ENCODE measurements at regions of chr13 and their contacts with region 1.

Region 1: DNA sequence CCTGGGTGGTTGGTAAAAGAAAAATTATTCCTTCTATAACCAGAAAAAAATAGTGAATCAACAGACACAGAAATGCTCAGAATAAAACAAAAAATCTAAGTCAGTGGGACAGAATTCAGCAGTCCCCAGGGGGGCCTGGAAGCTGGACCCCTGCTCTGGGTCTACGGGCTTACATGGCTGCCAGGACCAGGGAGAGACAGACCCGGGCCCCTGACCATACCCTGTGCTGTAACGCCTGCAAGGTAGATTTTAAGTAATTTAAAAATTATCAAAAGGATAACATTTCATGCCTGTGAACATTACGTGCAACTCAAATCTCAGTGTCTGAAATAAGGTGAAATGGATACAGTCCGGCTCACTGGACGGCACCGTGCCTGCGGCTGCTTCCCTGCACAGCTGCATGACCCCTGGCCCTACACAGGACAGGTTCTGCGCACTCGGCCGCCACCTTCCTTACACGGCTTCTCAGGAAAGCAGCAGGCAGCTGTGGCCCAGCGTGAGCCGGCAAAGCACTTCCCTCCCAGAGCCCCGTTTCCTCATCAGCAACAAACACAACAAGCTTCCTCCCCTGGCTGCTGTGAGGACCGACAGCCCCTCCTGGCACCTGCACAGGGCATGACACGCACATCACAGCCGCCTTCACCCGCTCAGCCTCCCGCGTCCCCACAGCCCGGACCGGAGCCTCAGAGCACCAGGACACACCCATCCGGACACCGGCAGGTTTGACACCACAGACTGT is 22.2 kb downstream of the RASA3 start:
- DNase-seq: peak; percentile 64 to 93 (median 80)
- ATAC-seq: peak; percentile 86
- H3K4me3 ChIP-seq: peak overlapping the region; percentile 40 to 53
- H3K4me3 Mint-ChIP-seq: peak overlapping the region; percentile 83
- H3K27ac ChIP-seq: peak overlapping the region; percentile 50 to 80
- H3K27ac Mint-ChIP-seq: peak overlapping the region; percentile 94
- H3K4me1 ChIP-seq: peaks cover 95% of the 10 kb centered on the region
- H3K4me1 Mint-ChIP-seq: peaks cover 82% of the 10 kb centered on the region
- H3K27me3 ChIP-seq: no peaks in the 10 kb centered on the region
- H3K27me3 Mint-ChIP-seq: no peaks in the 10 kb centered on the region
- CTCF ChIP-seq: peak; percentile 69

Region 2: GRCh38 chr13:113816946-113817859 is 293.1 kb before region 1 on chr13:
- CTCF ChIA-PET with region 1: interaction called, 3 read pairs
- POLR2A ChIA-PET with region 1: no interaction called
- intact Hi-C with region 1: loop called (anchors 1 kb)
- DNase-seq: peak; percentile 74 to 93 (median 90)
- ATAC-seq: peak; percentile 97
- H3K4me3 ChIP-seq: no peak overlapping the region
- H3K4me3 Mint-ChIP-seq: peak overlapping the region; percentile 82
- H3K27ac ChIP-seq: no peak overlapping the region
- H3K27ac Mint-ChIP-seq: peak overlapping the region; percentile 52
- H3K4me1 ChIP-seq: peaks cover 10% of the 10 kb centered on the region
- H3K4me1 Mint-ChIP-seq: peaks cover 22% of the 10 kb centered on the region
- H3K27me3 ChIP-seq: no peaks in the 10 kb centered on the region
- H3K27me3 Mint-ChIP-seq: peaks cover 2% of the 10 kb centered on the region
- CTCF ChIP-seq: peak; percentile 90

Region 3: GRCh38 chr13:114043421-114044053 is 66.7 kb before region 1 on chr13:
- CTCF ChIA-PET with region 1: interaction called, 9 read pairs
- POLR2A ChIA-PET with region 1: no interaction called
- intact Hi-C with region 1: loop called (anchors 2 kb)
- DNase-seq: peak in 3 of 9 experiments; percentile 28 to 53 (median 43)
- ATAC-seq: peak; percentile 44
- H3K4me3 ChIP-seq: no peak overlapping the region
- H3K4me3 Mint-ChIP-seq: no peak overlapping the region
- H3K27ac ChIP-seq: no peak overlapping the region
- H3K27ac Mint-ChIP-seq: peak overlapping the region; percentile 80
- H3K4me1 ChIP-seq: peaks cover 45% of the 10 kb centered on the region
- H3K4me1 Mint-ChIP-seq: peaks cover 53% of the 10 kb centered on the region
- H3K27me3 ChIP-seq: no peaks in the 10 kb centered on the region
- H3K27me3 Mint-ChIP-seq: no peaks in the 10 kb centered on the region
- CTCF ChIP-seq: no peak

Region 4: GRCh38 chr13:114065141-114065925 is 44.9 kb before region 1 on chr13:
- CTCF ChIA-PET with region 1: interaction called, 4 read pairs
- POLR2A ChIA-PET with region 1: interaction called, 16 read pairs
- intact Hi-C with region 1: loop called (anchors 1 to 5 kb)
- DNase-seq: peak; percentile 29 to 84 (median 76)
- ATAC-seq: peak; percentile 68
- H3K4me3 ChIP-seq: peak overlapping the region; percentile 37 to 72
- H3K4me3 Mint-ChIP-seq: peak overlapping the region; percentile 84
- H3K27ac ChIP-seq: peak overlapping the region; percentile 29 to 78
- H3K27ac Mint-ChIP-seq: peak overlapping the region; percentile 96
- H3K4me1 ChIP-seq: peaks cover 63% of the 10 kb centered on the region
- H3K4me1 Mint-ChIP-seq: peaks cover 67% of the 10 kb centered on the region
- H3K27me3 ChIP-seq: no peaks in the 10 kb centered on the region
- H3K27me3 Mint-ChIP-seq: no peaks in the 10 kb centered on the region
- CTCF ChIP-seq: no peak

Region 5: DNA sequence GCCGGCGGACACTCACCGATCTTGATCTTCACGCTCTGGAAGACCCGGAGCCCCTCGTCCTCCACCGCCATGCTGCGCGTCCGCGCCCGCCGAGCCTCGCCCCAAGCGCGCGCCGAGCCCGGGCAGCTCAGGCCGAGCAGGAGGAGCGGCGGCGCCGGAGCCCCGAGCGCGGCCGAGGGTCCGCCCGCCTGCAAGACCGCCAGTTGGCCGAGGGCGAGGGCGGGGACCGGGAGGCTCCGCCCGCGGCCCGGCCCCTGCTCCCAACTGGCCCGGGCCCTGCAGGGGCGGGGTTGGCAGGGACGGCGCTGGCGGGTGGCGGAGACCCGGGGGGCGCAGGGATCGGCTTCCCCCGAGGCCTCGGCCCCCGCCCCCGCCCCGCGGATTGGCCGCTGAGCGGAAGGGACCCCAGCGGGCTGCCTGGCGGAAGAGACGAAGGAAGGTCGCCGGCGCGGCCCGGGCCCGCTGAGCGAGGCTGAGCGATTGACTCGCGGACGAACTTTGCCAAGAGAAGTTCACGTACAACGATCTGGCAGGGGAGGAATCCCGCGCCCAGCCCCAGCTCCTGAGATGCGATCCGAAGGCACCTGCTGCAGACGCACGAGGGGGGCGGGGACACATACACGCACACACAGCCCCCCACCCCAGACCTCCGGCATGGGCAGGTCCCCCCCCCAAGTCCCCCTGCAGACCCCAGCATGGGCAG is 22.3 kb after region 1 on chr13 and contains the start of gene RASA3:
- CTCF ChIA-PET with region 1: interaction called, 56 read pairs
- POLR2A ChIA-PET with region 1: interaction called, 6 read pairs
- intact Hi-C with region 1: loop called in 1 of 2 experiments (anchors 2 kb)
- DNase-seq: peak in 7 of 9 experiments; percentile 55 to 84 (median 73)
- ATAC-seq: peak; percentile 35
- H3K4me3 ChIP-seq: peak within 1 kb of the TSS; percentile 96 to 99
- H3K4me3 Mint-ChIP-seq: peak within 1 kb of the TSS; percentile 100
- H3K27ac ChIP-seq: peak within 1 kb of the TSS; percentile 90 to 92
- H3K27ac Mint-ChIP-seq: peak within 1 kb of the TSS; percentile 100
- H3K4me1 ChIP-seq: peaks cover 43% of the 10 kb centered on the region
- H3K4me1 Mint-ChIP-seq: peaks cover 55% of the 10 kb centered on the region
- H3K27me3 ChIP-seq: no peaks in the 10 kb centered on the region
- H3K27me3 Mint-ChIP-seq: no peaks in the 10 kb centered on the region
- CTCF ChIP-seq: no peak
- total RNA-seq, gene RASA3: 144 TPM

Region 6: GRCh38 chr13:114226699-114227323 is 116.6 kb after region 1 on chr13:
- CTCF ChIA-PET with region 1: interaction called, 44 read pairs
- POLR2A ChIA-PET with region 1: interaction called, 4 read pairs
- intact Hi-C with region 1: loop called (anchors 1 kb)
- DNase-seq: peak; percentile 72 to 91 (median 87)
- ATAC-seq: peak; percentile 82
- H3K4me3 ChIP-seq: no peak overlapping the region
- H3K4me3 Mint-ChIP-seq: peak overlapping the region; percentile 54
- H3K27ac ChIP-seq: no peak overlapping the region
- H3K27ac Mint-ChIP-seq: peak overlapping the region; percentile 86
- H3K4me1 ChIP-seq: peaks cover 40% of the 10 kb centered on the region
- H3K4me1 Mint-ChIP-seq: peaks cover 42% of the 10 kb centered on the region
- H3K27me3 ChIP-seq: no peaks in the 10 kb centered on the region
- H3K27me3 Mint-ChIP-seq: peaks cover 6% of the 10 kb centered on the region
- CTCF ChIP-seq: peak; percentile 93

Region 7: DNA sequence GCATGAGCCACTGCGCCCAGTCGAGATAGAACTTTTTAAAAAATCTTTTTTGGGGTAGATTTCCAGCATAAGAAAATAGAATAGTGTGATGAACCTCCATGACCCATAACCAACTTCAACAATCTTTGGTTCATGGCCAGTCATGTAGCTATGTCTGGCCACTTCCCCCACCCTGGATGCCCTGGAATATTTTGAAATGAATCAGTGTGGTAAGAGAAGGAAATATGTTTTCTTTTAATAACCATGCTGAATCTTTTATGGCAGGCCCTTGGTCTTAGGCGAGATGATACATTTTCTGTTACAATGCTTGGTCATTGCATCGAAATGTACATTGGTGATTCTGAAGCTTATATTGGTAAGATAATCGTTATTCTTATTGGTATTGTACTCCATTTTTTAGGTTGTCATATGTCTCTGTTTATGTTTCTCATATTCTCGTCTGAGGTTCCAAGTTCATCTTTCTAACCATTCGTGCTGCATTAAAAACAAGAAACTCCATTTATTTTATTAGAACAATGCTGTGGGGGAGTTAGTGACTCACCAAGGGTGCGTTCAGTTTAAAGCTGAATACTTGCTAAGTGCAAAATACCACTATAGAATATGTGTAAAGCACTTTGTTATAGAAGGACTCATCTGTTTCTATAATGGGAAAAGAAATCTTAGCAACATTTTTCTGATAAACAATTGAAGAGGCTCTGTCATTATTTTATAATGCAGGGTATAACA is 154.8 kb after region 1 on chr13:
- CTCF ChIA-PET with region 1: no interaction called
- POLR2A ChIA-PET with region 1: no interaction called
- intact Hi-C with region 1: no loop called
- DNase-seq: no peak
- ATAC-seq: no peak
- H3K4me3 ChIP-seq: no peak overlapping the region
- H3K4me3 Mint-ChIP-seq: no peak overlapping the region
- H3K27ac ChIP-seq: no peak overlapping the region
- H3K27ac Mint-ChIP-seq: no peak overlapping the region
- H3K4me1 ChIP-seq: peaks cover 42% of the 10 kb centered on the region
- H3K4me1 Mint-ChIP-seq: peaks cover 53% of the 10 kb centered on the region
- H3K27me3 ChIP-seq: no peaks in the 10 kb centered on the region
- H3K27me3 Mint-ChIP-seq: no peaks in the 10 kb centered on the region
- CTCF ChIP-seq: no peak

Measured in CD8-positive, alpha-beta T cell (primary cell).